ENCODE measurements at regions of chr17 and their contacts with region 1.

Region 1: DNA sequence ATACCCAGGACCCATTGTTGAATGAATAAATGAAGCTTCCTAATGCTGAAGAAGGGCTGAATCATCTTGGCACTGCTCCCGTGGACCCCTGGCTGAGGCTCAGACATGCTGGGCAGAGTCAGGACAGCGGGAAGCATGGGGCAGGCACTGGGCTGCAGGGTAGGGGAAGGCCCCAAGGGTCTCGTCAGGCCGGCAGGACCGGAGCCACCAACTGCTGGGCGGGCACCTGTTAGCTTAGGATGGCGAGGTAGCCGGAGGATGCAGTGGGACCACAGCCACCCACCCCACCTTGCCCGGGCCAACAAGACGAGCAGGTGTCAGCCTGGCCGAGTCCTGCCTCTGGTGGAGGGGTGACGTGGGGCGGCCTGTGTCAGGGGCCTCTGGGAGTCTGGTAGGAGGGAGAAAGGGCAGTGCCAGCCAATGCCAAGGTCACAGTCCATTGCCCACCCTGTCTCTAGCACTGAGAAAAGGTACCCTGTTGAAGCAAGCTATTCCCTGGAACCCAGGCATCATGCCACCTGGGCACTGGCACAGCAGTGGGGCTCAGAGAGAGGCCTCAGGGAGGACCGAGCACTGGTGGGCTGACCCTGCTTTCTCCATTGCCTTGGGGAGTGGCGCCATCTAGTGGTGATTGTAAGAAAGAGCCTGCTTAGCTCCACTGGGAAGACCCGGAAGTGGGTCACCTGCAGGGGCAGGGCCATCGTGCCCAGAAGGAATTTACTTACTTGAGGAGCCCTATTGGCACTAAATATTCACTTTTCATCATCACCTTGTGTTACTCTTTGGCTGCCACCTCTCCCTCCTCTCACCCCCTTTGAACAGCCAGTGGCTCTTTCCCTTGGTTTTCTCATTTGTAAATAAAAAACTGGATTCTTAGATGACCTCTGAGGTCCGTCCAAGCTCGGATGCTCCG is 3.0 kb upstream of the DLX3 start:
- DNase-seq: peak; percentile 70 to 79
- ATAC-seq: peak; percentile 81 to 87 (median 83)
- H3K4me3 ChIP-seq: no peak overlapping the region
- H3K27ac ChIP-seq: no peak overlapping the region
- H3K4me1 ChIP-seq: peaks cover 19% of the 10 kb centered on the region
- H3K27me3 ChIP-seq: peaks cover 0 to 89% (median 25%) of the 10 kb centered on the region in 3 donors
- CTCF ChIP-seq: peak; percentile 97

Region 2: GRCh38 chr17:49567871-49568694 is 430.0 kb before region 1 on chr17:
- intact Hi-C with region 1: loop called (anchors 5 kb)
- DNase-seq: peak; percentile 92 to 96
- ATAC-seq: peak; percentile 73 to 84 (median 78)
- H3K4me3 ChIP-seq: peak overlapping the region; percentile 73
- H3K27ac ChIP-seq: peak overlapping the region; percentile 85
- H3K4me1 ChIP-seq: peaks cover 25% of the 10 kb centered on the region
- H3K27me3 ChIP-seq: no peaks in the 10 kb centered on the region
- CTCF ChIP-seq: peak; percentile 97

Region 3: GRCh38 chr17:49715717-49716279 is 282.2 kb before region 1 on chr17:
- intact Hi-C with region 1: loop called in 1 of 2 experiments (anchors 10 kb)
- DNase-seq: no peak
- ATAC-seq: no peak
- H3K4me3 ChIP-seq: no peak overlapping the region
- H3K27ac ChIP-seq: no peak overlapping the region
- H3K4me1 ChIP-seq: peaks cover 12% of the 10 kb centered on the region
- H3K27me3 ChIP-seq: no peaks in the 10 kb centered on the region
- CTCF ChIP-seq: no peak

Region 4: DNA sequence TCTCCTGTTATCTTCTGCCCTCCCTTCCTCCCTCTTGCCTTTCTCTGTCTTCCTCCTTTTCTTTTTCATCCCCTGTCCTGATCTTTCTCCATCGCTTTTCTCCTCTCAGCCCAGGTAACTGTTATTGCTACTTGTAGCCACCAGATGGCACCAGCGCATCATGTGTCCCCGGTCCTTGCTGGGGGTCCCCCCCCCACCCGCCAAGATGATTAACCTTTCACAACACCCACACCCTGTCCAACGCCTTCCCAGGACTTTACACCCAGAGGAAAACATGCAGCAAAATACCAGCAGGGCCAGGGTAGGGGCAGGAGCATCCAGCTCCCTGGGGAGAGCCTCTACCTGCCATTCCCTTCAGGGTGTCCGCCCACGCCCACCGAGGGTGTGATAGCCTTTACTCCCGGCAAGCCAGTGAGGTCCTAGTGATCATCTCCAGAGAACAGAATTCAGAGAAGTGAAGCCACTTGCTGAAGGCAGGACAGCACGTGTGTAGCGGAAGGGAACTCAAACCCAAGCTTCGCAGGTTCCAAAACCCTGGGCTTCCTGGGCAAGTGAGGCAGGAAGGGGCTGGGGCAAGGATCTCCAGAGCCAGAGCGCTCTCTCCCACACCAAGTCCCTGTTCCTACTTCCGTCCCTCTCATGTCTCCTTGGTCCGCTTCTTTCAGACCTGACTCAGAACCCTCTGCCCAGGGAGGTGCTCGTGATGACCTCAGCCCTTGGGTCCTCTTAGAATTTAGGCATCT is 136.7 kb before region 1 on chr17:
- intact Hi-C with region 1: loop called (anchors 1 to 2 kb)
- DNase-seq: peak in 1 of 2 donors; percentile 50
- ATAC-seq: peak; percentile 42 to 71 (median 58)
- H3K4me3 ChIP-seq: no peak overlapping the region
- H3K27ac ChIP-seq: no peak overlapping the region
- H3K4me1 ChIP-seq: peaks cover 8% of the 10 kb centered on the region
- H3K27me3 ChIP-seq: no peaks in the 10 kb centered on the region
- CTCF ChIP-seq: peak; percentile 82

Region 5: DNA sequence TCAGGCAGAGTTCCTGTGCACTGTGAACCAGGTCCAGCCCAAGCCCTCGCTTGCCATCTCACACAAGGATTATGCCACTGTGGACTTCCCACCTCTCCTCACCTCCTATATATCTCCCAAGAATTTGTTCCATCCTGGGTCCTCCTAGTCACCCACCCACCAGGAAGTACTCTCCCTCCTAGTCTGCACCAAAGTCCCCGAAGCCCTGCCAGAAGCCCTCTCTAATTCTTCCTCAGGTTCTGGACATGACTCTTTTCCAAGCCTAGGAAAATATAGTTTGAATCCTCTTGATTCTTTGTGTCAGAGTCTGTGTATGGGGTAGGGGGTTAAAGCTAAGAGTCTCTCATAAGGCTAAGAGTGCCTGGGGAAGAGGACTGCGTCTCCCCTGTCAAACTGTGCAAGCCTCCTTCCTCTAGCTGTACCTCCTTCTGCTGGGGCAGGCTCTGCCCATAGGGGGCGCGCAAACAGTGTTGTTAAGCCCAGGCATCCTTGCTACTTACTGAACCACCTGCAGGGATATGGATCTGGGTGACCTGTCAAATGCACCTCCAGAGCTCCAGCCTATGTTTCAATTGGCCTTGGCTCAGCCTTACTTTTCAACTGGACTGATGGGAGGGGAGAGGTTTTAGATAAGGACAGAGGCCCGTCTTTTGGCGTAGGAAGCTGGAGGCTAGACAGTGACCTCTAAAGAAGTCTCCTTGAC is 45.7 kb before region 1 on chr17:
- intact Hi-C with region 1: loop called in 1 of 2 experiments (anchors 2 kb)
- DNase-seq: peak; percentile 72 to 81
- ATAC-seq: peak; percentile 68 to 82 (median 70)
- H3K4me3 ChIP-seq: no peak overlapping the region
- H3K27ac ChIP-seq: no peak overlapping the region
- H3K4me1 ChIP-seq: no peaks in the 10 kb centered on the region
- H3K27me3 ChIP-seq: peaks cover 0 to 53% (median 8%) of the 10 kb centered on the region in 3 donors
- CTCF ChIP-seq: peak; percentile 62